ENCODE measurements at regions of chr12 and their contacts with region 1.

Region 1: GRCh38 chr12:32755654-32756475 is at the start of gene YARS2:
- DNase-seq: peak; percentile 93

Region 2: GRCh38 chr12:32947206-32948067 is 191.6 kb after region 1 on chr12:
- in situ Hi-C with region 1: loop called (anchors 25 kb)
- DNase-seq: peak; percentile 52

Region 3: GRCh38 chr12:34022079-34022830 is 1266.4 kb after region 1 on chr12 and contains the start of gene ALG10:
- in situ Hi-C with region 1: loop called (anchors 25 kb)
- DNase-seq: peak; percentile 99